ENCODE measurements at regions of chrX and their contacts with region 1.

Region 1: GRCh38 chrX:51892921-51893745 is at the start of gene MAGED1:
- DNase-seq: peak; percentile 75
- H3K4me3 Mint-ChIP-seq: peak within 1 kb of the TSS; percentile 96
- H3K27ac Mint-ChIP-seq: peak within 1 kb of the TSS; percentile 91
- H3K4me1 Mint-ChIP-seq: peaks cover 25% of the 10 kb centered on the region
- H3K27me3 Mint-ChIP-seq: no peaks in the 10 kb centered on the region
- total RNA-seq, gene MAGED1: 45.5 and 46.5 TPM in 2 replicates

Region 2: GRCh38 chrX:51743179-51743957 is 149.8 kb before region 1 on chrX and contains the start of gene GSPT2:
- intact Hi-C with region 1: loop called (anchors 1 kb)
- DNase-seq: peak; percentile 64
- H3K4me3 Mint-ChIP-seq: peak within 1 kb of the TSS; percentile 91
- H3K27ac Mint-ChIP-seq: peak within 1 kb of the TSS; percentile 74
- H3K4me1 Mint-ChIP-seq: peaks cover 9% of the 10 kb centered on the region
- H3K27me3 Mint-ChIP-seq: peaks cover 7% of the 10 kb centered on the region
- total RNA-seq, gene GSPT2: 11.4 and 12.1 TPM in 2 replicates

Region 3: DNA sequence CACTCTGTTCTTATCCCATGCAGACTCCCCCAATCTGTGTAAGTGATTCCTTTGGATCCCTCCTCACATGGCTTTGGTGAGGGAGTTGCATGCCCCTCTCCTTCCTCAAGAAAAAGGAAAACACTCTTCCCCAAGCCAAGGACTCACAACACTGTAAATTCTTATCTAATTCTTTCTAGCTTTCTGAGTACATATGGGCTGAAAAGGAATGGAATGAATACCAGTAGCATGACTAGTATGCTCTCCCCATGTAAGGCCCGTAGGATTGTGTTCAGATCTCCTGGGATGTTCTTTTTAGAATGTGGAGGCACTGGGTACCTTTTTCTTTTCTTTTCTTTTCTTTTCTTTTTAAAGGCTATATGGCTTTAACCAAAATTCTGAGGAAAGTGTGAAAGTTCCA is 16.7 kb before region 1 on chrX:
- intact Hi-C with region 1: no loop called
- DNase-seq: no peak
- H3K4me3 Mint-ChIP-seq: no peak overlapping the region
- H3K27ac Mint-ChIP-seq: no peak overlapping the region
- H3K4me1 Mint-ChIP-seq: no peaks in the 10 kb centered on the region
- H3K27me3 Mint-ChIP-seq: no peaks in the 10 kb centered on the region